GM12878 (cell line): ENCODE measurements at regions of chr11 and their contacts with region 1.

Region 1: DNA sequence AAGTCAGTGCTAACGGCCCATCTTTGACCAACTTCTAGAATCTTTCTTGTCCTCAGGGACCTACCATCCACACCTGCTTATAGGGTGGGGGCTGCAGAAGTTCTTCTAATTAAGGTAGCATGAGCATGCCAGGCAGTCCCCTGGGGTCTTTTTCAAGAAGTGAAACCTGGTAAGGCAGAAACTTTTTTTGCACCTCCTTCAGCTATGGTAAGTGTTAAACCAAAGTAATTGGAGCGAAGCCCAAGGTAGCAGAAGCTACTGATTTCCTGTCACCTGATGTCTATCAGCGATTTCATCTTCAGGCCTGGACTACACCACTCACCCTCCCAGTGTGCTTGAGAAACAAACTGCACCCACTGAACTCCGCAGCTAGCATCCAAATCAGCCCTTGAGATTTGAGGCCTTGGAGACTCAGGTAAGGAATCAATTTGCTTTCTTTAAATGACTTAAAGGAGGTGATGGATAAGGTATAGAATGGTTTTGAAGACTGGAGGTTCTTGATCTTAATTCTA is at the start of gene MS4A1:
- DNase-seq: peak; percentile 98
- ATAC-seq: peak; percentile 82
- H3K4me3 ChIP-seq: peak within 1 kb of the TSS; percentile 89
- H3K27ac ChIP-seq: peak within 1 kb of the TSS; percentile 93
- H3K4me1 ChIP-seq: peaks cover 21% of the 10 kb centered on the region
- H3K27me3 ChIP-seq: no peaks in the 10 kb centered on the region
- CTCF ChIP-seq: no peak
- EP300 ChIP-seq: peak; percentile 98 to 99
- POLR2A ChIP-seq: peak; percentile 90
- RAD21 ChIP-seq: 0 out of 2 replicates have a peak, but pooled peaks have one; percentile 14
- polyA plus RNA-seq, gene MS4A1: 730 to 1,013 TPM

Region 2: DNA sequence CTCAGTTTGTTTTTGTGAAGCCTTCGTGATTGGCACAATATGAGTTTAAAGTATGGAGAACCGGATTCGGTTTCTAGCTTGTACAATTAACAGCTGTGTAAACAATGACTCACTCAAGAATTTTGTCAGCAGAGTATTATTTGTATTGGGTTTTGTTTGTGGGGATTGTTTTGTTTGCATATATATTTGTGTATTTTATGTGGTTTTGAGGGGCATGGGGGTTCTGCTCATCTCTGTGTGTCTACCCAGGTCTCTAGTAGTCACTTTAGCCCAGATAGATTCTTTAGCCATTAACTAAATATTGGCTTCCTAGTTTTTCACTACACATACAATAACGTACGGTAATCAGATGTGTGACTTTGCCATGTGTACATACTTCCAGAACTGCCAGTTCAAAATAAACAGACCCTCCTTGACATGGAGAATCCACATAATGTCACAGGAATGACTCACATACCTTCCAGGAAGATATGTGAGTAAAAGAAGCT is 84.7 kb before region 1 on chr11:
- CTCF ChIA-PET with region 1: interaction called, 190 read pairs
- POLR2A ChIA-PET with region 1: interaction called, 23 read pairs
- RAD21 ChIA-PET with region 1: interaction called, 195 read pairs
- SMC1A ChIA-PET with region 1: interaction called, 298 read pairs
- in situ Hi-C with region 1: loop called (anchors 10 kb)
- intact Hi-C with region 1: loop called (anchors 1 kb)
- DNase-seq: no peak
- ATAC-seq: no peak
- H3K4me3 ChIP-seq: no peak overlapping the region
- H3K27ac ChIP-seq: no peak overlapping the region
- H3K4me1 ChIP-seq: peaks cover 5% of the 10 kb centered on the region; the same call in 1 of the 2 replicates
- H3K27me3 ChIP-seq: no peaks in the 10 kb centered on the region
- CTCF ChIP-seq: no peak
- EP300 ChIP-seq: no peak
- POLR2A ChIP-seq: no peak
- RAD21 ChIP-seq: no peak

Region 3: DNA sequence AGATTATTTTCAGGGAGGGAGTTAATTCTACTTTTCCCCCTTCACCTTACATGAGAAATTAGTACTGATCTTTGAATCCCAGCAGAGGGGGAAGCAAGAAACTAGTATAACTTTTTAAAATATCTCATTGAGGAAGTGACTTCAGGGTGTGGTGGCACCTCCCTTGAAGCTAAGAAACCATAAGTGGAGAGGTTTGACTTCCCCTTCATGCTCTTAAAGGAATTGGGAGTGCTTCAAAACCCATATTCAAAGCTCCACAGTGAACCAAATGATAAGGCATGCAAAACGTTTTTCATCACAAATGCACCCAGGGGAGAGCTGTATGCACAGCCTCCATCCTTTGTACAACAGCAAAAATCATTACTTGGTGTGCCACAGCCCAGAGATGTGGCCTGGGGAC is 58.8 kb before region 1 on chr11:
- CTCF ChIA-PET with region 1: interaction called, 10 read pairs
- POLR2A ChIA-PET with region 1: interaction called, 3 read pairs
- RAD21 ChIA-PET with region 1: interaction called, 4 read pairs
- SMC1A ChIA-PET with region 1: interaction called, 15 read pairs
- in situ Hi-C with region 1: no loop called
- intact Hi-C with region 1: no loop called
- DNase-seq: peak; percentile 47
- ATAC-seq: peak; percentile 84
- H3K4me3 ChIP-seq: no peak overlapping the region
- H3K27ac ChIP-seq: peak overlapping the region; percentile 53
- H3K4me1 ChIP-seq: peaks cover 16% of the 10 kb centered on the region
- H3K27me3 ChIP-seq: no peaks in the 10 kb centered on the region
- CTCF ChIP-seq: no peak
- EP300 ChIP-seq: no peak
- POLR2A ChIP-seq: no peak
- RAD21 ChIP-seq: no peak

Region 4: GRCh38 chr11:60485986-60486385 is 30.4 kb after region 1 on chr11:
- CTCF ChIA-PET with region 1: interaction called, 31 read pairs
- POLR2A ChIA-PET with region 1: interaction called, 3 read pairs
- RAD21 ChIA-PET with region 1: interaction called, 18 read pairs
- SMC1A ChIA-PET with region 1: interaction called, 16 read pairs
- in situ Hi-C with region 1: no loop called
- intact Hi-C with region 1: no loop called
- DNase-seq: peak; percentile 86
- ATAC-seq: peak; percentile 100
- H3K4me3 ChIP-seq: no peak overlapping the region
- H3K27ac ChIP-seq: no peak overlapping the region
- H3K4me1 ChIP-seq: peaks cover 9% of the 10 kb centered on the region
- H3K27me3 ChIP-seq: no peaks in the 10 kb centered on the region
- CTCF ChIP-seq: peak; percentile 91 to 100 (median 99); a peak in 5 of 6 replicates
- EP300 ChIP-seq: no peak
- POLR2A ChIP-seq: no peak
- RAD21 ChIP-seq: peak; percentile 93

Region 5: GRCh38 chr11:61061081-61061826 is 605.7 kb after region 1 on chr11:
- CTCF ChIA-PET with region 1: no interaction called
- POLR2A ChIA-PET with region 1: no interaction called
- RAD21 ChIA-PET with region 1: no interaction called
- SMC1A ChIA-PET with region 1: no interaction called
- in situ Hi-C with region 1: loop called (anchors 10 kb)
- intact Hi-C with region 1: no loop called
- DNase-seq: peak; percentile 97
- ATAC-seq: peak; percentile 90
- H3K4me3 ChIP-seq: peak overlapping the region; percentile 48; the same call in 1 of the 2 replicates
- H3K27ac ChIP-seq: peak overlapping the region; percentile 84
- H3K4me1 ChIP-seq: peaks cover 30% of the 10 kb centered on the region
- H3K27me3 ChIP-seq: no peaks in the 10 kb centered on the region
- CTCF ChIP-seq: no peak
- EP300 ChIP-seq: peak; percentile 91 to 99
- POLR2A ChIP-seq: peak; percentile 43; the same call in 1 of the 2 replicates
- RAD21 ChIP-seq: peak; percentile 27